ENCODE measurements at regions of chr17 and their contacts with region 1.

Region 1: GRCh38 chr17:55161935-55162555 is 102.7 kb upstream of the HLF start:
- DNase-seq: no peak
- H3K4me3 ChIP-seq: no peak overlapping the region
- H3K27ac ChIP-seq: no peak overlapping the region
- H3K4me1 ChIP-seq: no peaks in the 10 kb centered on the region
- H3K27me3 ChIP-seq: no peaks in the 10 kb centered on the region
- CTCF ChIP-seq: no peak
- POLR2A ChIP-seq: no peak

Region 2: GRCh38 chr17:54864636-54865356 is 297.2 kb before region 1 on chr17:
- intact Hi-C with region 1: no loop called
- DNase-seq: no peak
- H3K4me3 ChIP-seq: no peak overlapping the region
- H3K27ac ChIP-seq: no peak overlapping the region
- H3K4me1 ChIP-seq: no peaks in the 10 kb centered on the region
- H3K27me3 ChIP-seq: no peaks in the 10 kb centered on the region
- CTCF ChIP-seq: no peak
- POLR2A ChIP-seq: no peak

Region 3: GRCh38 chr17:55219934-55220333 is 57.9 kb after region 1 on chr17:
- intact Hi-C with region 1: loop called (anchors 10 kb)
- DNase-seq: no peak
- H3K4me3 ChIP-seq: no peak overlapping the region
- H3K27ac ChIP-seq: no peak overlapping the region
- H3K4me1 ChIP-seq: no peaks in the 10 kb centered on the region
- H3K27me3 ChIP-seq: no peaks in the 10 kb centered on the region
- CTCF ChIP-seq: no peak
- POLR2A ChIP-seq: no peak